ENCODE measurements at regions of chr10 and their contacts with region 1.

Region 1: GRCh38 chr10:28302638-28303488 is at the start of gene MPP7:
- DNase-seq: peak; percentile 94
- H3K4me3 Mint-ChIP-seq: peak within 1 kb of the TSS; percentile 88
- H3K27ac Mint-ChIP-seq: no peak within 1 kb of the TSS
- H3K4me1 Mint-ChIP-seq: peaks cover 33% of the 10 kb centered on the region
- H3K27me3 Mint-ChIP-seq: peaks cover 42% of the 10 kb centered on the region
- total RNA-seq, gene MPP7: 0.60 and 0.73 TPM in 2 replicates

Region 2: GRCh38 chr10:28250782-28251181 is 52.1 kb before region 1 on chr10:
- intact Hi-C with region 1: loop called (anchors 5 kb)
- DNase-seq: no peak
- H3K4me3 Mint-ChIP-seq: no peak overlapping the region
- H3K27ac Mint-ChIP-seq: no peak overlapping the region
- H3K4me1 Mint-ChIP-seq: peaks cover 7% of the 10 kb centered on the region
- H3K27me3 Mint-ChIP-seq: peaks cover 5% of the 10 kb centered on the region

Region 3: DNA sequence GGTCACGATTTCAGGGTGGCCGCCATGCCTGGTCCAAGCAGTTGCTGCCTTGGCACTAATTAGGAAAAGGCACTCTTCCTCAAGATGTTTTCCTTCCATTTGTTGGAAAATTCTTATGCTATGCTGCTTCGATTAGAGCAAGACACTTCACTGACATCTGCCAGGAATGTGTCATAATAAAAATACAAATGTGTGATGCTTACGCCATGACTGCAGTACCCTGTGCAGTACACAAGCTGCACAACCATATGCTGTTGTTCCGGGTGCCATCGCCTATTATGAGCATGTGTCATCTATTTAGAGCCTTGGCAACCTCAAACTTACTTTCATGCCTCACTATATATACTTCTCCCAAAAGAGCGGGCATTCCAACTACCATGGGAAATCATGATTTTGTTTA is 14.9 kb after region 1 on chr10:
- intact Hi-C with region 1: no loop called
- DNase-seq: no peak
- H3K4me3 Mint-ChIP-seq: no peak overlapping the region
- H3K27ac Mint-ChIP-seq: no peak overlapping the region
- H3K4me1 Mint-ChIP-seq: no peaks in the 10 kb centered on the region
- H3K27me3 Mint-ChIP-seq: peaks cover 7% of the 10 kb centered on the region

Region 4: GRCh38 chr10:28367929-28368484 is 65.1 kb after region 1 on chr10:
- intact Hi-C with region 1: loop called (anchors 1 kb)
- DNase-seq: peak; percentile 60
- H3K4me3 Mint-ChIP-seq: peak overlapping the region; percentile 37
- H3K27ac Mint-ChIP-seq: peak overlapping the region; percentile 83
- H3K4me1 Mint-ChIP-seq: peaks cover 24% of the 10 kb centered on the region
- H3K27me3 Mint-ChIP-seq: no peaks in the 10 kb centered on the region